ENCODE measurements at regions of chr4 and their contacts with region 1.

Region 1: DNA sequence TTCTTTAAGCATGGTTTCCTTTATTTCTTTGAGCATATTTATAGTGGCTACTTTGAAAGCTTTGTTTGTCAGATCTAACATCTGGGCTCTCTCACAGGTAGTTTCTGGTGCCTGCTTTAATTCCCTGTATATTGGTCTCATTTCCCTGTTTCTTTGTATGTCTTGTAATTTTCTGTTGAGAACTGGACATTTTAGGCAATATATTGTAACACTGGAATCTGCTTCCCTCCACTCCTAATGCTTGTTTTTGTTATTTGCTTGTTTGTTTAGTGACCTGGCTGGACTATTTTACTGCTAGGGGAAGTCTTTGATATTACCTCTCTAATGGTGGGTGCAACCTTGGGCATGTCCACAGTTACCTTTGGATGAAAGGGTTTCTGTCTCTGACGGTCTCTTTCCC is 25.0 kb downstream of the BMPR1B start:
- DNase-seq: no peak
- H3K4me3 ChIP-seq: no peak overlapping the region
- H3K27ac ChIP-seq: no peak overlapping the region
- H3K4me1 ChIP-seq: no peaks in the 10 kb centered on the region
- H3K27me3 ChIP-seq: no peaks in the 10 kb centered on the region
- CTCF ChIP-seq: no peak

Region 2: GRCh38 chr4:94806376-94806775 is 23.7 kb after region 1 on chr4:
- CTCF ChIA-PET with region 1: no interaction called
- dilution Hi-C with region 1: no loop called
- in situ Hi-C with region 1: no loop called
- intact Hi-C with region 1: loop called (anchors 2 kb)
- DNase-seq: no peak
- H3K4me3 ChIP-seq: no peak overlapping the region
- H3K27ac ChIP-seq: no peak overlapping the region
- H3K4me1 ChIP-seq: no peaks in the 10 kb centered on the region
- H3K27me3 ChIP-seq: no peaks in the 10 kb centered on the region
- CTCF ChIP-seq: no peak

Measured in mammary epithelial cell (primary cell).